ENCODE measurements at regions of chr14 and their contacts with region 1.

Region 1: GRCh38 chr14:99946652-99947489 is 118.4 kb upstream of the EVL start:
- DNase-seq: no peak
- H3K4me3 ChIP-seq: no peak overlapping the region
- H3K27me3 ChIP-seq: no peaks in the 10 kb centered on the region; the same call in 1 of the 2 replicates
- CTCF ChIP-seq: peak; percentile 93

Region 2: DNA sequence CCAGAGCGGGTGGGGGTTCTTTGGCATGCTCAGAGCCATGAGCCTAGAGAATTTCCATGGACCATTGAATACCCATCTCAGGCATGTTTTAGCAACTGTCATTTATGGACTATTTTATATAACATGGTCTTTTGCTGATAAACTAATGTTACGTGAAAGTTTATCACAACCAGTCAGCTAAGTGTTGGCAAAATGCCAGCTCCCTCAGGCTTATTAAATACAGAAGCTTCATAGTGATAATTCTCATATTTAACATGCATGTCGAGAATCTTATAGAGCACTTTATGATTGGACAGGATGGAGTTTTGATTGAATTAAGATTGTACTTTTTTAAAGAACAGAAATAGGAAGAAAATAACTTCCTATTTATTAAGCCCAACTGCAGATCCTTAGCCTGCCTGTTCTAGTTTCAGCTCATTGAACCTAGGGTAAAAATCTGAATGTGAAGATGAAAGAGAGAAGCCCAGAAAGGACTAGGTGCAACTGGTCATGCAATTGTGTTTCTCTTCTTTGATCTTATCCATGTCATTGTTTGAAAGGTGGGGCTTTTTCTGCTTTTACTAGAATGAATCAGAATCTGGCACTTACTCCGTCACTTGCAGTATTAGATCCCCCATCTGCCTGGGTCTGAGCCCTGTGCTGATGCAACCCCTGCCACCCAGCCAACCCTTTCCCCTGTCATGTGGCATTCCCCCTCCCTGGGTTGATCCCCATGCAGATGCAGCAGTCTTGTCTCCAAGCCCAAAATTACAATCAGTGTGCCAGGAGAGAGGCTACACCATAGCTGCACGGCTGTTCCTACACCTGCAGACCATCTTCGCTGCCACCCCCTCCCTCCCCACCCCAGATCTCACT is 16.2 kb before region 1 on chr14:
- CTCF ChIA-PET with region 1: interaction called, 40 read pairs
- POLR2A ChIA-PET with region 1: no interaction called
- DNase-seq: no peak
- H3K4me3 ChIP-seq: no peak overlapping the region
- H3K27me3 ChIP-seq: no peaks in the 10 kb centered on the region
- CTCF ChIP-seq: no peak